K562 (cell line): ENCODE measurements at regions of chr3 and their contacts with region 1.

Region 1: DNA sequence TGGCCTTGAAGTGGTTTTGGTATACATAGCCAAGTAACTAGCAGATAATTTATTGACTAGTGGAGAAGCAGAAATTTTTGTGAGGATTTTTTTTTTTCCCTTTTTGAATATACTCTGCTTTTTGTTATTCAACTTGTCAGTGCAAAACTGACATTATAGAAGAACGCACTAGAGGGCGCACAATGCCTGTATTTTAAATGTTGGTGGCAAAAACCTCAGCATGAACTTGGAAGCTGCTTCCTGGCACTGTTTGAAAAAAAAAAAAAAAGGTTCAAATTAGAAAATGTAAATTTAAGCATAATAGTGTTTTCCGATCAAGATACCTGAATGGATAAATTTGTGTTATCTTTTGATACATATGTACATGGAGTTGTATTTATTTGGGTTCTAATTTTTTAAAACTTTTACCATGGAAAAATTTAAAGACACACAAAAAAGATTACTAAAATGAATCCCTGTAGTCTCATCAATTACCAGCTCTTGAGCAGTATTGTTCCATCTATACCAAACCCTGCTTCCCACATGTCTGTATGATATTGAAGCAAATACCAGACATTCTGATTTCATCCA is 56.0 kb downstream of the SLC25A26 start:
- DNase-seq: peak in 3 of 4 experiments; percentile 7 to 60 (median 19)
- ATAC-seq: peak; percentile 48; the same call in 1 of the 3 replicates
- H3K4me3 ChIP-seq: no peak overlapping the region
- H3K27ac ChIP-seq: no peak overlapping the region
- H3K4me1 ChIP-seq: no peaks in the 10 kb centered on the region
- H3K27me3 ChIP-seq: no peaks in the 10 kb centered on the region
- CTCF ChIP-seq: peak; percentile 38 to 65 (median 45); a peak in 4 of 6 replicates
- EP300 ChIP-seq: no peak
- POLR2A ChIP-seq: no peak
- RAD21 ChIP-seq: peak; percentile 55 to 67

Region 2: GRCh38 chr3:66378256-66378823 is 101.5 kb after region 1 on chr3:
- CTCF ChIA-PET with region 1: no interaction called
- POLR2A ChIA-PET with region 1: no interaction called
- in situ Hi-C with region 1: no loop called
- intact Hi-C with region 1: loop called (anchors 5 kb)
- DNase-seq: peak in 3 of 4 experiments; percentile 17 to 23 (median 19)
- ATAC-seq: no peak
- H3K4me3 ChIP-seq: no peak overlapping the region
- H3K27ac ChIP-seq: no peak overlapping the region
- H3K4me1 ChIP-seq: peaks cover 0 to 4% of the 10 kb centered on the region in 2 experiments; a peak in 2 of 5 replicates
- H3K27me3 ChIP-seq: no peaks in the 10 kb centered on the region
- CTCF ChIP-seq: peak; percentile 40 to 66 (median 46)
- EP300 ChIP-seq: no peak
- POLR2A ChIP-seq: no peak
- RAD21 ChIP-seq: 0 out of 4 replicates have a peak, but pooled peaks of 1 of the 2 experiments have one; percentile 5

Region 3: DNA sequence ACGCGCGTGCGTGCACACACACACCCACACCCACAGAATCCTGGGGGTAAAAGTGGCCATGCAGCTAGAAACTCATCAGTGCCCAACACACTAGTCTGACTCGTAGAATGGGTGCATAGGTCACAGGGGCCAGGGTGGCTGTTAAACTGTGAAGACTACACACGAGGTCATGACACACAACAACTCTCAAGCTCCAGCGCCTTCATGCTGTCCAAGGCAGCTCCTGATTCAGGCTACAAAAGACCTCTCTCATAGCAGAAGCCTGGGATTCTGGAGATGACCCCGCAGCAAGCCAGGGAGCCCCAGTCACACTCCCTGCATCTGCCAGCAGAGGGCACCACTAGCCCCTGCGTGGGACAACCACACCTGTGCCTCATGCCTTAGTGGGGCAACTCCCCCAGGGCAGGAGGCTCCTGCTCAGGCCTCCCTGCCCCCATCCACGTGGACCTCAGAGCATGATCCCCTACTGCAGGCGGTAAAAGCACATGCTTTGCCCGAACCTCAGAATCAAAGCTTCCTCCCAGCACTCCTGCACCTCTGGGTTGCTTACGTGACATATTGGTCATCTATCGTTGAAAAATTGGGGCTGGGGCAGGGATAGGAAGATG is 130.9 kb after region 1 on chr3:
- CTCF ChIA-PET with region 1: no interaction called
- POLR2A ChIA-PET with region 1: no interaction called
- in situ Hi-C with region 1: no loop called
- intact Hi-C with region 1: loop called (anchors 2 kb)
- DNase-seq: peak; percentile 60 to 83 (median 78)
- ATAC-seq: peak; percentile 88
- H3K4me3 ChIP-seq: no peak overlapping the region
- H3K27ac ChIP-seq: no peak overlapping the region
- H3K4me1 ChIP-seq: peaks cover 0 to 11% of the 10 kb centered on the region in 2 experiments; a peak in 2 of 5 replicates
- H3K27me3 ChIP-seq: peaks cover 0 to 14% of the 10 kb centered on the region in 2 experiments; a peak in 1 of 5 replicates
- CTCF ChIP-seq: peak; percentile 72 to 76 (median 74)
- EP300 ChIP-seq: no peak
- POLR2A ChIP-seq: no peak
- RAD21 ChIP-seq: peak; percentile 72 to 83

Region 4: DNA sequence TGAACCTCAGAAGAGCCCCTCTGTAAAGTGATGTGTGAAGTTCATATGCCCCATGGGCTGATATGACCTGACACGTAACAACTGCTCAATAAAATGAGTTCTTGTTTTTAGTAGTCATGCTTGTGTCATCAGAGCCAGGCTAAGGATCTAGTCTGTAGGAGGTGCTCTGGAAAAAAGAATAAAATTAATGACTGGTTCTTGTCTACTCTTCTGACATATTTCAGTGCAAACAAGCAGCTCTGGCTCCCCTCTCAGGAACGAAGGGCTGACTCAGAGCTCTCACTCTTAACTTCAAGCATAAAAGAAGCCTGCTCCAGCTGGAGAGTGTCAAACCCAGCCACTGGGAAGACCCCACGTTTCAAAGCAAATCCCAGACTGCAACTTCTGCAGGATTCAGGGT is 147.0 kb after region 1 on chr3:
- CTCF ChIA-PET with region 1: no interaction called
- POLR2A ChIA-PET with region 1: no interaction called
- in situ Hi-C with region 1: no loop called
- intact Hi-C with region 1: no loop called
- DNase-seq: no peak
- ATAC-seq: no peak
- H3K4me3 ChIP-seq: no peak overlapping the region
- H3K27ac ChIP-seq: no peak overlapping the region
- H3K4me1 ChIP-seq: no peaks in the 10 kb centered on the region
- H3K27me3 ChIP-seq: peaks cover 0 to 11% of the 10 kb centered on the region in 2 experiments; a peak in 2 of 5 replicates
- CTCF ChIP-seq: no peak
- EP300 ChIP-seq: no peak
- POLR2A ChIP-seq: no peak
- RAD21 ChIP-seq: no peak

Region 5: DNA sequence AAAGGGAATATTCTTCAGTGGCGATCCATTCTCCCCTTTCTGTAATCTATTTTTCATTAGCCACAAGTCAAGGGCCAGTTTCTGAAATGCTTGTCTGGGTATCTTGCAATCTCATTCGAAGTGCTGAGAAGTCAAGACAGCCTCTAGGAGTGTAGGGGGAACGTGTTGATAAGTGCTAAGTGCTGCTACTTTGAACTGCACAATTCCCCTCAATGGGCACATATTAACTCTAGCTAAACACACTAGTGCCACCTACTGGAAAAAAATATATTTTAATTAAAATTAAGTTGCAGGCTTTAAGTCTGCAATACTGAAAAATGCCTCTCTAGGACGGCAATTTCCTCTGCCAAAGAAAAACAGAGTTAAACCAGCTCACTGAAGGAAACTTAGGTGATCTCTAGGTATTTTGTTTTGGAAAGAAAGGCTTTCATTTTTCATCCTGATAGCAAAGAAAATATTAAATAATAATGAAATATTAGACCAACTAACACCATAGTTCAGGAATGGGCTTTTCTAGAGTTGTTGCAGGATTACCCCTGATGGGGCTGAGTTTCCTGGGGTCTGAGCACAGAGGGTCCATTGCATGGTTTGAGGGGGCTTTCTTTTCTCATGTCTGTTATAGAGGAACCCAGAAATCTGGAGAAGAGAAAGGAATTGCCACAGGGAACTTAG is 539.4 kb after region 1 on chr3:
- CTCF ChIA-PET with region 1: interaction called, 9 read pairs
- POLR2A ChIA-PET with region 1: no interaction called
- in situ Hi-C with region 1: loop called (anchors 5 kb)
- intact Hi-C with region 1: no loop called
- DNase-seq: peak; percentile 16 to 27 (median 18)
- ATAC-seq: peak; percentile 78
- H3K4me3 ChIP-seq: no peak overlapping the region
- H3K27ac ChIP-seq: no peak overlapping the region
- H3K4me1 ChIP-seq: no peaks in the 10 kb centered on the region
- H3K27me3 ChIP-seq: no peaks in the 10 kb centered on the region
- CTCF ChIP-seq: peak in 2 of 3 experiments; percentile 23 to 61; a peak in 4 of 6 replicates
- EP300 ChIP-seq: no peak
- POLR2A ChIP-seq: no peak
- RAD21 ChIP-seq: peak; percentile 69 to 74

Region 6: DNA sequence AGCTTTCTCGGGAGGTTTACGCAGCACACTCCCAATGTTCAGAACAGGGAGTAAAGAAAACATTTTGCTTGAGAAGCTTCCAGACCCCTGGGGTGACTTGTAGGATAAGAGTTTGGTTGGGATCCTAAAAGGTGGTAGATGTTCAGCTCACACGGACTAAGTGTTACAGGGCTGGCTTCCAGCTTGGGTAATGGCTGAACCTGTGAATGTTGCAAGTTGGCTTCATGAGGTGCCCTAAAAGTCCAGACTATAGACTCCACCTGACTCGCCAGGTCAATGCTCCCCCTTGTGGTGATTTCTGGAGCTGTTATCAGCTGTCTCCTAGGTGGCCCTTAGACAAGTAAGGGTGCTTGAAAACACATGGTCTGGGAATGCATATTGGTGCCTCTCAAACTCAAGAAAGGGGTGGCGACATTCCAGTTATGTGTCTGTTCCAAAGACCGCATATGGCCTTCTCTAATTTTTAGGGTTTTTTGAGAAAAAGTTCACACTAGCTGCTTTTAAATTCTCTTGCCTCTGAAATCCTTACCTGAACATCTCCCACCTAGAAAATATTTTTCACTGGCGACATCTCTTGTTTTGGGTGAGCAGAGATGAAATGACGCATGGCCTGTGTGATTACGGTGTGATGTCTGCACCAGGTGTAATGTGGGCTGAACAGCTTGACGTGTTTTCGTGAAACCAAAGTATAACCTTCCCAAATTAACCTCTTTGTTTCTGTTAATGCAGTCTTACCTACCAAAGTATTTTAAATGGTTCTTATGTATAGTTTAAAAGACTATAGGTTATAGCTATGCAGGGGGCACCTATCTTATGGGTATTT is 545.6 kb after region 1 on chr3:
- CTCF ChIA-PET with region 1: no interaction called
- POLR2A ChIA-PET with region 1: no interaction called
- in situ Hi-C with region 1: loop called (anchors 5 kb)
- intact Hi-C with region 1: loop called (anchors 2 kb)
- DNase-seq: peak; percentile 39 to 68 (median 64)
- ATAC-seq: peak; percentile 88
- H3K4me3 ChIP-seq: no peak overlapping the region
- H3K27ac ChIP-seq: no peak overlapping the region
- H3K4me1 ChIP-seq: no peaks in the 10 kb centered on the region
- H3K27me3 ChIP-seq: no peaks in the 10 kb centered on the region
- CTCF ChIP-seq: peak; percentile 61 to 68 (median 62)
- EP300 ChIP-seq: no peak
- POLR2A ChIP-seq: no peak
- RAD21 ChIP-seq: peak; percentile 36 to 59; a peak in 3 of 4 replicates